ENCODE measurements at regions of chr4 and their contacts with region 1.

Region 1: GRCh38 chr4:173318648-173319211 is 15.4 kb downstream of the HMGB2 start:
- DNase-seq: no peak
- H3K4me3 ChIP-seq: no peak overlapping the region
- H3K27ac ChIP-seq: no peak overlapping the region
- H3K4me1 ChIP-seq: peaks cover 0 to 4% (median 2%) of the 10 kb centered on the region in 4 donors
- H3K27me3 ChIP-seq: no peaks in the 10 kb centered on the region
- CTCF ChIP-seq: peak in 3 of 4 experiments; percentile 33 to 37 (median 34)
- EP300 ChIP-seq: no peak
- POLR2A ChIP-seq: no peak

Region 2: GRCh38 chr4:173494013-173494970 is 175.6 kb after region 1 on chr4:
- intact Hi-C with region 1: loop called (anchors 5 kb)
- DNase-seq: peak; percentile 87
- H3K4me3 ChIP-seq: peak overlapping the region; percentile 13 to 51 (median 49)
- H3K27ac ChIP-seq: peak overlapping the region in 3 of 4 donors; percentile 43 to 61 (median 51)
- H3K4me1 ChIP-seq: peaks cover 0 to 28% (median 23%) of the 10 kb centered on the region in 4 donors
- H3K27me3 ChIP-seq: no peaks in the 10 kb centered on the region
- CTCF ChIP-seq: peak; percentile 73 to 86 (median 78)
- EP300 ChIP-seq: no peak
- POLR2A ChIP-seq: no peak

Region 3: GRCh38 chr4:174318829-174319764 is 1000.4 kb after region 1 on chr4:
- intact Hi-C with region 1: loop called (anchors 10 kb)
- DNase-seq: no peak
- H3K4me3 ChIP-seq: no peak overlapping the region
- H3K27ac ChIP-seq: peak overlapping the region in 1 of 4 donors; percentile 17
- H3K4me1 ChIP-seq: peaks cover 0 to 25% (median 0%) of the 10 kb centered on the region in 4 donors
- H3K27me3 ChIP-seq: no peaks in the 10 kb centered on the region
- CTCF ChIP-seq: peak in 3 of 4 experiments; percentile 59 to 79 (median 70)
- EP300 ChIP-seq: no peak
- POLR2A ChIP-seq: no peak